ENCODE measurements at regions of chr17 and their contacts with region 1.

Region 1: GRCh38 chr17:29148790-29149430 is 31.3 kb downstream of the MYO18A start:
- DNase-seq: peak; percentile 96 to 98
- ATAC-seq: peak; percentile 92 to 96 (median 94)
- H3K4me3 ChIP-seq: peak overlapping the region; percentile 66
- H3K27ac ChIP-seq: peak overlapping the region; percentile 80
- H3K4me1 ChIP-seq: peaks cover 35% of the 10 kb centered on the region
- H3K27me3 ChIP-seq: no peaks in the 10 kb centered on the region
- CTCF ChIP-seq: peak; percentile 98

Region 2: DNA sequence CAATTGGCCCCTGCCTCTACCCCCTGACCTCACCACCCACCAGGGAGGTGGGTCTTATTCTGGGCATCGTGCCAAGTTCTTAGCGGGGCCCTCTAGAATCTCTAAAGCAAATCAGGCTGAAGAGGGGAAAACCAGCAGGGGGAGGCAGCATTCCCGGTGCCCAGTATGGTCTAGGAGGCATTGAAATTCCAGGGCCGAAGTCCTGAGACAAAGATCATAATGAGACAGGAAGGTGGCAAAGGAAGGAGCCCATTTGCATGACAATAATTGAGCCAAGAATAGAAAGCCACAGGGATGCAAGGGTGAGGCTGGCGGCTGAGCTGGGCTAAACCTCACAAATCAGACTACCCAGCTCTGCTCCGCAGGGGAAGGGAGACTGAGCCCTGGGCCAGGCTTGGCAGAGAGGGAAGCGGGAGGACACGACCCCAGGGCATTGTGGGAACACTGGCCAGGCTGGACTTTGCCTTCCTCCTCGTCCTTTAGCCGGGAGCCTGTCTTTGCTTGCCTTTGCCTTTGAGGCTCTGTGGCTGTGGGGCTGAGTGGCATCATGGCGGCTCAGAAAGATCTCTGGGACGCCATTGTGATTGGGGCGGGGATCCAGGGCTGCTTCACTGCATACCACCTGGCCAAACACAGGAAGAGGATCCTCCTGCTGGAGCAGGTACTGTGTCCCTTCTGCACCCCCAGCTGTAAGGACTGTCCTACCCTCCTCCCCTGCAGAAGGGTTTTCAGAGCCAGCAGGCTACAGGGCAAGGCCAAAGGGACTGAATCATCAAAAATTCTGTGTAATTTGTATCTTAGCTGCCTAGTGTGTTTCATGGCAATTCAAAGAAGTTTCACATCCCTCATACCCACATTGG is 106.0 kb before region 1 on chr17 and contains the start of gene PIPOX:
- intact Hi-C with region 1: no loop called
- DNase-seq: no peak
- ATAC-seq: peak in 2 of 4 donors; percentile 21 to 32
- H3K4me3 ChIP-seq: peak within 1 kb of the TSS; percentile 18
- H3K27ac ChIP-seq: no peak within 1 kb of the TSS
- H3K4me1 ChIP-seq: peaks cover 5% of the 10 kb centered on the region
- H3K27me3 ChIP-seq: peaks cover 0 to 5% (median 4%) of the 10 kb centered on the region in 3 donors
- CTCF ChIP-seq: no peak
- total RNA-seq, gene PIPOX: 0.26 to 1.7 (median 0.91) TPM in 3 of 4 donors, not detected in the other

Region 3: DNA sequence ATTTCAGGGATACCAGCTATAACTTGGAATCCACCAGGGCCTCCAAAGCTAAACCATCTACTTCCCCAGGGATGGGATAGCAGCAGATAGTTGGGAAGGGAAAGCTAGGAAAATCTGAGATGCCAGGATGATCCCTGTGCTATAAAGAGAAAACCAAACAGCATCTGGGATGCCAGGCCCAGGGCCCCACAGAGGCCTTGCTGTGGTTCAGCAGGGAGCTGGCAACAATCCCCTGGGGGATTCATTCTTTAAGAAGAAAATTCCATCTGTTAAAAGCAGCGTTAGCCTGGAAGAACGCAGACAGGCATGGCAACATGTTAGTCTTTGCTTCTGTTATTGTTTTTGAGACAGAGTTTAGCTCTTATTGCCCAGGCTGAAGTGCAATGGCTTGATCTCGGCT is 14.7 kb after region 1 on chr17:
- intact Hi-C with region 1: no loop called
- DNase-seq: no peak
- ATAC-seq: no peak
- H3K4me3 ChIP-seq: no peak overlapping the region
- H3K27ac ChIP-seq: no peak overlapping the region
- H3K4me1 ChIP-seq: peaks cover 6% of the 10 kb centered on the region
- H3K27me3 ChIP-seq: no peaks in the 10 kb centered on the region
- CTCF ChIP-seq: no peak

Region 4: DNA sequence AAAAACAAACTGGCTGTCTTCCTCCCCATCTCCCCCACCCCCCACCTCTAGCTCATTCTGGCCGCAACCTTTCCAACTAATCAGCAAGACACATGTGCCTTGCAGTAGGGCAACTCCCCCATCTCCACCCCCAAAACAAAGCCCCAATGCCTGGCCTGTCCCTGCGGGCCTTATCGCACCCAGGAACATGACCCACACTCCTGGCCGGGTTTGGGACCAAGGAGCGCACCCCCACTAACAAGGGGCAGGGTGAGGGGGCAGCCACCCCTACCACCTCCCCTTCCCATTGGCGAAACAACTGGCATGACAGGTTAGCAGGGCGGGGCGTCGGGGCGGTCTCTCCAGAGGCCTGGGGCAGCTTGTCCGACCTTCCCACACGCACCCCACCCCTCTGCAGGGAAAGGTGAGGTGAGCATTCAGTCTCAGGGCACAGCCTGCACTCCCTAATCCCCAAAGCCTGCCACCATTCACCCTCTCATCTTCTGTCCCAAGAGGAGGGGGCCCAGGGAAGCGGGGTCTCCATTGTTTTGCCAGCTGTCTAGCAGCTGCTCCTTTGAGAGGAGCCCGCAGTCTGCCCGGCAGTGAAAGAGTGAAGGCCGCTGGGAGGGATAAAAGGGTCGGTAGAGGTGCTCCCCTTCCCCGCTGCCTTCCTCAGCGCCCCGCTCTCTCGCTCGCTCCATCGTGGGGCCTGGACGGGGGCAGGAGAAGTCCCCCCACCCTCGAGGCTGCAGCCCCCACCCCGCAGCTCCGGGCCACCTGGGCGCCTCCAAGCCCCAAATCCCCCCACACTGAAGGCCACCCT is 30.5 kb after region 1 on chr17:
- intact Hi-C with region 1: loop called (anchors 2 kb)
- DNase-seq: peak in 1 of 2 donors; percentile 30
- ATAC-seq: no peak
- H3K4me3 ChIP-seq: peak overlapping the region; percentile 70
- H3K27ac ChIP-seq: no peak overlapping the region
- H3K4me1 ChIP-seq: peaks cover 13% of the 10 kb centered on the region
- H3K27me3 ChIP-seq: no peaks in the 10 kb centered on the region
- CTCF ChIP-seq: no peak

Region 5: GRCh38 chr17:29219378-29220047 is 70.6 kb after region 1 on chr17:
- intact Hi-C with region 1: loop called (anchors 1 to 2 kb)
- DNase-seq: peak; percentile 69 to 75
- ATAC-seq: peak; percentile 68 to 93 (median 76)
- H3K4me3 ChIP-seq: no peak overlapping the region
- H3K27ac ChIP-seq: no peak overlapping the region
- H3K4me1 ChIP-seq: no peaks in the 10 kb centered on the region
- H3K27me3 ChIP-seq: no peaks in the 10 kb centered on the region
- CTCF ChIP-seq: peak; percentile 90

Region 6: DNA sequence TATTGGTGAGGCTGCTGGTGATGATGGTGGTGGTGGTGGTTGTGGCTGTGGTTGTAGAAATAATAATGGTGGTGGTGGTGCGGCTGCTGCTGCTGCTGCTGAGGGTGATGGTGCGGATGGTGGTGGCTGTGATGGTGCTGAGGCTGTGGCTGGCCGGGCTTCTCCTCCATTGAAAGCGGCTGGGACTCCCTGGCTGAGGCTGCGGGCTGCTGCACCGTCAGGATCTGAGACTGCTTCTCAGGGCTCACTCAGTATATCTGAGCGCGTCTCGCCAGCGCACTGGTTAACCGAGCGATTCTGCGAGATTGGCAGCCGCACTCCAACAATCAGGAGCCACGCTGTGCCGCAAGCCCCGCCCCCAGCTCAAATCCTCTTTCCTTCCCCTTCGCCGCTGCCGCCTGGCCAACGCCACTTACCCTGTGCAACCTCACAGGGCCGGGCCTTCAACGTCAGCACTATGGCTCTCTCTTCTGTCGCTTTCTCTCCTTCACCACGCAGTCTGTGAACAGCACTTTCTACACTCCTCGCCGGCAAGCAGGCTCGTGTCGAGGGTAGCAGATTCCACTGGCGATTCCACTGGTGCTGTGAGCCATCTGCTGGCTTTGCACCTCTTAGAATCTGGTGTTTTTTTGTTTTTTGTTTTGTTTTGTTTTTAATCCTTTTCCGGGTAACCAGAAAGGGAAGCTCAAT is 145.1 kb after region 1 on chr17 and contains the start of gene NUFIP2:
- intact Hi-C with region 1: loop called (anchors 2 kb)
- DNase-seq: peak; percentile 99 to 100
- ATAC-seq: peak; percentile 92 to 94 (median 94)
- H3K4me3 ChIP-seq: peak within 1 kb of the TSS; percentile 98
- H3K27ac ChIP-seq: peak within 1 kb of the TSS; percentile 99
- H3K4me1 ChIP-seq: peaks cover 28% of the 10 kb centered on the region
- H3K27me3 ChIP-seq: no peaks in the 10 kb centered on the region
- CTCF ChIP-seq: no peak
- total RNA-seq, gene NUFIP2: 31.1 to 50.0 (median 45.4) TPM